Colonic mucosa (tissue), 4 donors: ENCODE measurements at regions of chr1 and their contacts with region 1.

Region 1: DNA sequence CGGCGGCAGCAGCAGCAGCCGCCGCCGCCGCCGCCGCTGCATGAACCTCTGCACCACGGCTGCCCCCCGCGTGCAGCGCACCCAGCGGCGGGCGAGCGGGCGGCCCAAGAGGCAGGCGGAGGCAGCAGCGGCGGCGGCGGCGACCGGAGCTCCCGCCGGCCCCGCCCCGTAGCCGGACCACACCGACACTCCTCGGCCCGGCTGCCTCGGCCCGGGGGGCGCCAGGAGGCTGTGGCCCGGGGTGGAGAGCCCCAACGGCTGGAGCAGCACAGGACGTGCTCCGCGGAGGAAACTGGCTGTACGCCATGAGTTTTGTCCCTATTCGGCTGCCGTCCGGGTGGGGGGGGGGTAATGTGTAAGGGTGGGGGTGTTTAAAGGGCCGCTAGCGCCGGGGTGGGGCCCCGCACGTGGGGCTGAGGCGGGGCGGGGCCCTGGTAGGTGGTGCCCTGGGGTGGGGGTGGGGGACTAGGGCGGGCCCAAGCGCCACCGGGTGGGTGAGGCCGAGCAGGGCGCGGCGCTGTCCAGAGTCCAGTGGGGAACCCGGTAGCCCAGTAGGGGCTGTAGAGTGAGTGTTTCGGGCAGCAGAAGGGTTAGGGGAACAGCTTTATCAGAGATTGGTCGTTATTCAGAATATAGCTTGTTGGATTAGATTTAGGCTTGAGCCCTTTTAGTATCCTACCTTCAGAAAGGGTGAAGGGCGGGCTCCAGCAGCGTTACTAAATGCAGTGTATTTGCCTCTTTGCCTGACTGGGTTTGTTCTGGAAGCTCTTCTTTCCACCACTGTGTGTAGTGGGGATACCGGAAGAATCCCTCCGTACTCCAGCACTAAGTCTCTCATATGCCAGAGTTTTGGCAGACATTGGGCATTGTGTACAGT is at the start of gene FAM78B:
- DNase-seq: peak; percentile 81
- H3K4me3 ChIP-seq: peak within 1 kb of the TSS; percentile 37
- H3K27ac ChIP-seq: peak within 1 kb of the TSS; percentile 48
- H3K4me1 ChIP-seq: peaks cover 5% of the 10 kb centered on the region
- H3K27me3 ChIP-seq: peaks cover 7% of the 10 kb centered on the region
- CTCF ChIP-seq: no peak
- total RNA-seq, gene FAM78B: 0.69 to 1.2 TPM

Region 2: GRCh38 chr1:165933446-165934178 is 233.3 kb before region 1 on chr1:
- intact Hi-C with region 1: loop called (anchors 10 kb)
- DNase-seq: no peak
- H3K4me3 ChIP-seq: no peak overlapping the region
- H3K27ac ChIP-seq: no peak overlapping the region
- H3K4me1 ChIP-seq: no peaks in the 10 kb centered on the region
- H3K27me3 ChIP-seq: no peaks in the 10 kb centered on the region
- CTCF ChIP-seq: no peak